Mammary epithelial cell (primary cell): ENCODE measurements at regions of chr17 and their contacts with region 1.

Region 1: GRCh38 chr17:76681222-76682137 is 29.3 kb downstream of the MXRA7 start:
- DNase-seq: peak; percentile 48
- H3K4me3 ChIP-seq: no peak overlapping the region
- H3K27ac ChIP-seq: no peak overlapping the region
- H3K4me1 ChIP-seq: no peaks in the 10 kb centered on the region
- H3K27me3 ChIP-seq: no peaks in the 10 kb centered on the region
- CTCF ChIP-seq: peak; percentile 73 to 89

Region 2: DNA sequence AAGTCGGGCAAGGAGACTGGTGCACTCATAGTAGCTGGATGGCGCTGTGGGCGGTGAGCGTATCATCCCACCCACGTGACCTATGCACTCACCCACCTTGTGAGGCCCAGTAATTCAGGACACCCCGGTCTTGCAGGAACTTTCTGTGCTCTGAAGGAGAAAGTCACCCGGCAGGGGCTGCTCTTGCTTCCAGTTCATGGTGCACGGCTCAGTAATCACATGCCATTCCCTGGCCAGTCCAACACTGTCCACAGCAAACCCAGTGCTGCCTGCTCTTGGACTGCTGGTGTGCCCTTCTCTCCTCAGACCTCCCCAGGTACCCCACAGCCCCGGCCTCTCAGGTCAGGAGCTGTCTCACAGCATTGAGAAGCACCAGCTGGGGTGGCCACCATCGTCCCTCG is 163.8 kb before region 1 on chr17:
- CTCF ChIA-PET with region 1: no interaction called
- dilution Hi-C with region 1: no loop called
- in situ Hi-C with region 1: no loop called
- intact Hi-C with region 1: no loop called
- DNase-seq: no peak
- H3K4me3 ChIP-seq: no peak overlapping the region
- H3K27ac ChIP-seq: no peak overlapping the region
- H3K4me1 ChIP-seq: peaks cover 9% of the 10 kb centered on the region
- H3K27me3 ChIP-seq: peaks cover 3% of the 10 kb centered on the region
- CTCF ChIP-seq: no peak

Region 3: DNA sequence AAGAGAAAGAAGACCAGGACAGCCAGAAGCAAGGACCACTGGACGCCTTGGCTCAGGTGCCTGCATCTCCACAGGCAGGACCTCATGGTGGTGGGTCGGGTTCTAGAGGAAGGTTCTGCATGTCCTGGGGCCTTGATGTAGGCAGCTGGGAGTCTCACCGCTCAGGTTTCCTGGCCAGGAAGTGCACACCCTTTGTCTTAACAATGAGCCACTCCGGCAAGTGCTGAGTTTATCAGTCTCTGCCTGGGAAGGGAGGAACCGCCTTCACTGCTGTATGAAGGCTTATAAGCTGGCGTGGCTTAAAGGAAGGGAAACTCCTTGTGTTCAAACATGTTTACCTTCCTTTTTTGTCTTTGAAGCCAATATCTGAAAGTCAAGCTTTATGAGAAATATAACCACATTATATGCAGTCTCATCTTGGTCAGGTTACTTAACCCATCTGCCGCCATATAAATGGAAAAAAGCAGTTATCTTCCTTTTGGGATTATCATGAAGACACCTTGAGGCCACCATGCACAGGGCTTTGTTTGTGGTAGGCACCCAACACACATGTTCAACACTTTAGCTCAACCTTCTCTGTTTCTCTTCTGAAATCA is 37.8 kb before region 1 on chr17 and contains the start of gene ST6GALNAC1:
- CTCF ChIA-PET with region 1: no interaction called
- dilution Hi-C with region 1: loop called (anchors 5 kb)
- in situ Hi-C with region 1: no loop called
- intact Hi-C with region 1: no loop called
- DNase-seq: no peak
- H3K4me3 ChIP-seq: no peak within 1 kb of the TSS
- H3K27ac ChIP-seq: no peak within 1 kb of the TSS
- H3K4me1 ChIP-seq: peaks cover 4% of the 10 kb centered on the region
- H3K27me3 ChIP-seq: no peaks in the 10 kb centered on the region
- CTCF ChIP-seq: no peak
- total RNA-seq, gene ST6GALNAC1: not detected

Region 4: DNA sequence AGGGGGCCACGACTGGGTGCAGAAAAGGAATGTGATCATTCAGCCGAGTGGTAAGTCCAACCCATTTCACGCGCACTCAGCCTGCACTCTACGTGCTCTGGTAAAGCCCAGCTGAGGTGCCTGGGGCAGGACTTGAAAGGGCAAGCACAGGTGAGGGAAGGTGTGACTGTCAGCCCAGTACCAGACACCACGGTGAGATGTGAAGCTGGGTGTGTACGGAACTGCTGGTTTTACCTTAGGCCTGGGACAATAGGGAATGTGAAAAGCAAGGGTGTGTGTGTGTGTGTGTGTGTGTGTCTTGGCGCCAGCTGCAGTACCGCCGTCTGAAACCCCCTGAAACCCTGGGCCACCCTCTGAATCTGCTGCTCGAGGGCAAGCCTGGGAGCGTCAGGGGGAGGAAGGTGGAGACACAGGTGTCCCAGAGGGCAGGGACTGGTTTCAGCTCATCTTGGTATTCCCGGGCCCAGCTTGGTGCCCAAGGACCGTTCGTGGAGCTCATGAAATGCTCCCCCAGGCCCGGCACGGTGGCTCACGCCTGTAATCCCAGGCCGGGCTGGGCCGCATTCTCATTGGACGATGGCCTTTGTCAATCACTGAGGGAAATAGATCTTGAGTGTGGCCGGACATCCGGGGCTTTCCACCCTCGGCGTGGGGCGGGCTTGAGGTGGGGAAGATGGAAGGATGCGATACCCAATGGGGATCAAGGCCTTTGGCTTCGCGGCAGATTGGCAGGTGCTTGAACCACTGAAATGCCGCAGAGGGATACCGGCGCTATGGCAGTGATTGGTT is 10.2 kb before region 1 on chr17:
- CTCF ChIA-PET with region 1: no interaction called
- dilution Hi-C with region 1: no loop called
- in situ Hi-C with region 1: no loop called
- intact Hi-C with region 1: no loop called
- DNase-seq: peak; percentile 100
- H3K4me3 ChIP-seq: peak overlapping the region; percentile 68 to 81 (median 72)
- H3K27ac ChIP-seq: peak overlapping the region; percentile 33
- H3K4me1 ChIP-seq: peaks cover 17% of the 10 kb centered on the region
- H3K27me3 ChIP-seq: no peaks in the 10 kb centered on the region
- CTCF ChIP-seq: no peak